Activated B cell treated with CpG ODN at 0.5 μM for 24 hours (primary cell): ENCODE measurements at regions of chr7 and their contacts with region 1.

Region 1: GRCh38 chr7:142689439-142690120 is 59.7 kb upstream of the PRSS1 start:
- DNase-seq: no peak
- ATAC-seq: no peak
- H3K4me3 Mint-ChIP-seq: no peak overlapping the region
- H3K27ac Mint-ChIP-seq: no peak overlapping the region
- H3K4me1 Mint-ChIP-seq: peaks cover 8% of the 10 kb centered on the region
- H3K27me3 Mint-ChIP-seq: no peaks in the 10 kb centered on the region
- CTCF ChIP-seq: no peak

Region 2: DNA sequence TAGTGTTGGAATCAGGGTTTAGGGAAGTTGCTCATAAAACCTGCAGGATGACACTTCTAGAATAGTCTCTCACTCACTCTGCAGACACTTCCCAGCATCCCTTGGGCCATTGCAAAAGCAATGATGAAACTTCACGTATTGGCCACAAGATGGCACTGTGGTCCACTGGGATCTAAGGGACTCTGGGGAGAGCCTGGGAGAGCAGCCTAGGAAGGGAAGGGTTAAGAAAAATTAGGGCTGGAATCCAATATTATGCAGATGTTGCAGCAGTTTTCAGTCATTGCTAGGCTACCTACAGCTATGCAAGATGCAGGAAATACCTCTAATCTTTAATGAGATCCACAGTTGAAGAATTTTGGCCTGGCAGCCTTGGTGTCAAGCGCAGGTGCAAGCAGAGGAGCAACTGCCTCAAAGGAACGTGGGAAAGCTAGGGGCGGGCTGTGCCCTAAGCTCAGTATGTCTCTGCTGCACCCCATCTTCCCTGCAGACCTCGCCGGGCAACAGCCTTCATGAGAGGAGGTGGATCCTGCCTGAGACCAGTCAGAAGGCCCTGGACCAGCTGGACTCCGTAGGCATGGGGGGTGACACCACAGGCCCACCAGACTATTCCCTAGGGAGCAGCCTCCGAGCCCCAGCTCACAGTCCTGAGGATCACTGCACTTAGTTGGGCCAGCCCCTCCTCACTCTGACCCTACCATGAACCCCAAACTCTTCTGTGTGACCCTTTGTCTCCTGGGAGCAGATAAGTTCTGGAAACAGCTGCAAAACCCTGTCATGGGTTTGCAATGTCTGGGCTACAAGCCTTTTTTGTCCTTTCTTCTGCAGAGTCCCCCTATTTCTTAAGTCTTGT is 303.9 kb before region 1 on chr7:
- CTCF ChIA-PET with region 1: no interaction called
- POLR2A ChIA-PET with region 1: no interaction called
- intact Hi-C with region 1: no loop called
- DNase-seq: no peak
- ATAC-seq: peak; percentile 62
- H3K4me3 Mint-ChIP-seq: no peak overlapping the region
- H3K27ac Mint-ChIP-seq: no peak overlapping the region
- H3K4me1 Mint-ChIP-seq: peaks cover 8% of the 10 kb centered on the region
- H3K27me3 Mint-ChIP-seq: peaks cover 11% of the 10 kb centered on the region
- CTCF ChIP-seq: no peak

Region 3: DNA sequence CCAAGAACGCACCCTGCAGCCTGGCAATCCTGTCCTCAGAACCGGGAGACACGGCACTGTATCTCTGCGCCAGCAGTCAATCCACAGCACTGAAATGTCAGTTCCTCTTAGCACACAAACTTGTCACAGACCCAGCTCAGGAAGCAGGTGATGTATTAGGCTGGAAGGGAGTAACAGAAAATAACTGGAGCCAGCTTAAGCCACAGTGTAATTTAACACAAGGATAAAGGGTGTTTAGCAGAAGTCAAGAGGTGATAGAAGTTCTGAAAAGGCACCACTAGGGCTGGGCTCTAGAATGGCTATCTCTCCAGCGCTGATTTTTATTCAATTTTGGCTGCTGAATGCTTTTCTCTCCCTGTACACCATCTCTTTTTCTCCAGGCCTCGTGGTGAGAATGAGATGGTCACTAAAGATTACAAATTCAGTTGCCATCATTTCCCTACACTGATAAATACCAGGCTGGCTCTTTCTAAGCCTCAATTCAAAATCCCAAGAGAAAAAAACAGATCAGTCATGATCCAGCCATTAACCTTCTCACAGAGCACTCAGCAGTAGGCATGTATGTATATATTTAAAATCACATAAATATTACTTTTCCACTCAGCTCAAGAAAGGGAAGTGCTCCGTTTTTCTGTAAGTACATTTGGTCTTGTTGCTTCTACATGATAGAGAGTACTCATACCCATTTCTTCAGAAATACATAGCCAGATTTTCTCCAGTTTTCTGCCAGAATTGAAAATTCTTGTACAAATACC is 43.0 kb before region 1 on chr7:
- CTCF ChIA-PET with region 1: no interaction called
- POLR2A ChIA-PET with region 1: no interaction called
- intact Hi-C with region 1: loop called (anchors 5 kb)
- DNase-seq: no peak
- ATAC-seq: peak; percentile 28
- H3K4me3 Mint-ChIP-seq: peak overlapping the region; percentile 36
- H3K27ac Mint-ChIP-seq: no peak overlapping the region
- H3K4me1 Mint-ChIP-seq: peaks cover 13% of the 10 kb centered on the region
- H3K27me3 Mint-ChIP-seq: peaks cover 52% of the 10 kb centered on the region
- CTCF ChIP-seq: no peak